ENCODE measurements at regions of chr12 and their contacts with region 1.

Region 1: DNA sequence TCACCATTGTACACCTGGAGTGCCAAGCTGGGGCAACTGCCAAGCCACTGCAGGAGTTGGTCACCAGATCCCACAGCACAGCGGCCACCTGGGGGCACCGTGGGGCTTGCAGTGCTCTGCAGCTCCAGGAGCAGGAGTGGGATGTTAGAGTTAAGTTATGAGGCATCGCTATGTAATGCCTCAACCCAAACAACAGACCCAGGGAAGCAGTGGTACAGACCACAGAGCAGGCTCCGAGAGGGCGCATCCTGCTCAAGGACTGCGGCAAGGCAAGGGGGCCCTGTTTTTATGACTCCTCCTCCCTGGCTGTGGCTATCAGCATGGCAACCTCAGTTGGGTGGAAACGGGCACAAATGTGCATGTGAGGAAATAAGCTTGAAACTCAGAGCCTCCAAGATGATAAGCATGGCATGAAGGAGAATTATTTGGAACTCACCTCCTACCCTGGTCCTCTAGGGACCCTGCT is 63.1 kb downstream of the ARL6IP4 start:
- DNase-seq: peak; percentile 75
- H3K4me3 ChIP-seq: no peak overlapping the region
- H3K27ac ChIP-seq: no peak overlapping the region
- H3K4me1 ChIP-seq: no peaks in the 10 kb centered on the region
- H3K27me3 ChIP-seq: no peaks in the 10 kb centered on the region
- CTCF ChIP-seq: peak; percentile 63 to 84
- POLR2A ChIP-seq: no peak

Region 2: GRCh38 chr12:122602456-122602855 is 441.1 kb before region 1 on chr12:
- CTCF ChIA-PET with region 1: no interaction called
- POLR2A ChIA-PET with region 1: no interaction called
- dilution Hi-C with region 1: no loop called
- intact Hi-C with region 1: no loop called
- DNase-seq: no peak
- H3K4me3 ChIP-seq: no peak overlapping the region
- H3K27ac ChIP-seq: no peak overlapping the region
- H3K4me1 ChIP-seq: no peaks in the 10 kb centered on the region
- H3K27me3 ChIP-seq: no peaks in the 10 kb centered on the region
- CTCF ChIP-seq: no peak
- POLR2A ChIP-seq: no peak

Region 3: GRCh38 chr12:123071099-123071775 is 27.7 kb after region 1 on chr12:
- CTCF ChIA-PET with region 1: interaction called, 13 read pairs
- POLR2A ChIA-PET with region 1: no interaction called
- dilution Hi-C with region 1: no loop called
- intact Hi-C with region 1: no loop called
- DNase-seq: no peak
- H3K4me3 ChIP-seq: no peak overlapping the region
- H3K27ac ChIP-seq: no peak overlapping the region
- H3K4me1 ChIP-seq: peaks cover 7% of the 10 kb centered on the region
- H3K27me3 ChIP-seq: no peaks in the 10 kb centered on the region
- CTCF ChIP-seq: no peak
- POLR2A ChIP-seq: no peak

Region 4: DNA sequence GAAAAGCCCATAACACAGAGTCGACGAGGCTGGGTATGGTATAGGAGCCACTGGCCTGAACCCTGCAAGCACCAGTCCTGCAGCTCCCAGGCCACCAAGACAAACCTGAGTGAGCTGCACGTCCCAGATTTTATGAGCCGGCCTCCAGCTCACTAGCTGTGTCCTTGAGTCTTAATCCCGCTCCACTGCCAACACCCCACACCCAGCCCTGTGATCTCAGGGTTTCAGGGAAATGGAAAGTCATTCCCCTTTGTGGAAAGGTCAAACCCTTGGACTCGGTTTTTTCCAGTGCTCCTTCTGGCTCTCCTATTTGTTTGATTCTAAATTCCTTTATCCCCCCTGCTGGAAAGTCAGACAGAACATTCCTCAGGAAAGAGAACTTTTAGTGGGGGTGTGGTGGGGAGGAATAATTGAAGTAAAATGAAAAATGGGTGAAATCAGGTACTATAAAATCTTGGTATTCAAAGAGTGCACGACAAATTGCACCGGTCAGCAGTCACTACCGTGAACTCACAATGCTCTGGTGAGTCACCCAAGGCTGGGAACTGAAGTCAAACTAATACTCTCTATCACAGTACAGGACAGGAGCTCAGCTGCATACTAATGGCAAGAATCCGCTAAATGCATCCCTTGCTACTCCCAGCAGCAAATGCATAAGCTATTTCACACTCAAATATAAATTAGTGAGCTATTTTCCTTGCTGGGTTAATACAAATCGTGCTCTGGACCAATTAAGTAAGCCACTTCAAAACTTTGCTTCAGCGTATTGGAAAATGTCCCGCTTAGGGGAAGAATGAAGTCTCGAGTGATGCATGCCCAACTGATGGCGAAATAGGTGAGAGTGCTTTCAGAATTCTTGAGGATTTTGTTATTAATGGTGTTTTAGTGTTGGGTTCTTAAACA is 98.3 kb after region 1 on chr12:
- CTCF ChIA-PET with region 1: interaction called, 18 read pairs
- POLR2A ChIA-PET with region 1: no interaction called
- dilution Hi-C with region 1: no loop called
- intact Hi-C with region 1: no loop called
- DNase-seq: peak; percentile 72
- H3K4me3 ChIP-seq: peak overlapping the region in 1 of 3 experiments; percentile 6
- H3K27ac ChIP-seq: peak overlapping the region; percentile 34
- H3K4me1 ChIP-seq: peaks cover 29% of the 10 kb centered on the region
- H3K27me3 ChIP-seq: no peaks in the 10 kb centered on the region
- CTCF ChIP-seq: no peak
- POLR2A ChIP-seq: no peak

Region 5: DNA sequence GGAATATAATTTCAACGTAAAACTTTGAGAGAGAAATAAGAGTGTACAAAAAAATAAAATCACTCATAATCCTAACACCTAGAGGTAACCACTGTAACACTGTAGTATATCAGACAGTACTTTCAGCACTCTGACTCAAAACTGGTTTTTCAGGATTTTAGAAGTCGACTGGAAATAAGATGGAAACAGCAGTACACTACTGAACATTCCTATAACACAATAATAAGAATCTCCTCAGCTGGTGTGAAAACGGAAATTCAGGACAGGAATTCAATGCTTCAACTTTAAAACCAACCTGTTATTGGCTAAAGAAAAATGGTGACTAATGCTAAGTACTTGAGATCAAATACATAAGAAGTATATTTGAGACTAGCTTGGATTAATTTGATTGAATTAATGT is 119.7 kb after region 1 on chr12:
- CTCF ChIA-PET with region 1: interaction called, 19 read pairs
- POLR2A ChIA-PET with region 1: no interaction called
- dilution Hi-C with region 1: no loop called
- intact Hi-C with region 1: no loop called
- DNase-seq: no peak
- H3K4me3 ChIP-seq: no peak overlapping the region
- H3K27ac ChIP-seq: no peak overlapping the region
- H3K4me1 ChIP-seq: no peaks in the 10 kb centered on the region
- H3K27me3 ChIP-seq: no peaks in the 10 kb centered on the region
- CTCF ChIP-seq: no peak
- POLR2A ChIP-seq: no peak